Activated naive CD8-positive, alpha-beta T cell treated with anti-CD3 and anti-CD28 coated beads, Interleukin-2, amount 10 ng/mL, durations not matched to agents 7 days and 5 days (primary cell): ENCODE measurements at regions of chr16 and their contacts with region 1.

Region 1: GRCh38 chr16:21056396-21056795 is 94.2 kb downstream of the DNAH3 start:
- DNase-seq: no peak
- ATAC-seq: no peak
- H3K4me3 Mint-ChIP-seq: no peak overlapping the region
- H3K27ac Mint-ChIP-seq: no peak overlapping the region
- H3K4me1 Mint-ChIP-seq: no peaks in the 10 kb centered on the region
- H3K27me3 Mint-ChIP-seq: peaks cover 25% of the 10 kb centered on the region

Region 2: DNA sequence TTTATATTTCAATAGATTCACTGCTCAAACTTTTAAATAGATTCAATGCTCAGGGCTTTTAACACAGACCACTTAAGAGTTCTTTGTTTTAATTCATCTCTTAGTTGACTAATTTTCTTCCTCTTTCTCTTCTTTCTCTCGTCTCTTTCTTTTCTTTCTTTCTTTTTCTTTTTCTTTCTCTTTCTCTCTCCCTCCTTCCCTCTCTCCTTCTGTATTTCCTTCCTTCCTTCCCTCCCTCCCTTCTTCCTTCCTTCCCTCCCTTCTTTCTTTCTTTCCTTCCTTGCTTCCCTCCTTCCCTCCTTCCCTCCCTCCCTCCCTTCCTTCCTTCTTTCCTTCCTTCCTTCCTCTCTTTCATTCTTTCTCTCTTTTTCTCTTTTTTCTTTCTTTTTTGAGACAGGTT is 51.4 kb before region 1 on chr16:
- POLR2A ChIA-PET with region 1: no interaction called
- DNase-seq: no peak
- ATAC-seq: no peak
- H3K4me3 Mint-ChIP-seq: no peak overlapping the region
- H3K27ac Mint-ChIP-seq: no peak overlapping the region
- H3K4me1 Mint-ChIP-seq: no peaks in the 10 kb centered on the region
- H3K27me3 Mint-ChIP-seq: peaks cover 28% of the 10 kb centered on the region

Region 3: DNA sequence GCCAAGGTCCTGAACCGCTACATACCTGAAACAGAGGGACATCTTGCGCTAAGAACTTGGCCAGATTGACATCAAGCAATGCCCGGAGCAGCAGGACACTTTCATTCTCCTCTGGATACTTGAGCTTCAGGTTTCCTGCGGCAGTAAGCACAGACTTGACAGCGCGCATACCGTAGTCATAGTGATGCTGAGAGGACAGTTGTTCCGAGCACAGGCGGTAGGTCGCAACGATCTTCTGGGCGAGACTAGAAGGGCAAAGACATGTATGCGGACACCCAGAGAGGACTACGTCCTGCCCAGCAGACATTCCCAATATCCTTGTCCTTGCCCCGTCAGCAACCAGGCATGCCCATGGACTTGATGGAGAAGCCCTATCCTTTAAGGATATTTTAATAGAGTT is 18.7 kb before region 1 on chr16:
- POLR2A ChIA-PET with region 1: interaction called, 10 read pairs
- DNase-seq: no peak
- ATAC-seq: no peak
- H3K4me3 Mint-ChIP-seq: no peak overlapping the region
- H3K27ac Mint-ChIP-seq: no peak overlapping the region
- H3K4me1 Mint-ChIP-seq: no peaks in the 10 kb centered on the region
- H3K27me3 Mint-ChIP-seq: peaks cover 10% of the 10 kb centered on the region